HEK293 (cell line): ENCODE measurements at regions of chr6 and their contacts with region 1.

Region 1: DNA sequence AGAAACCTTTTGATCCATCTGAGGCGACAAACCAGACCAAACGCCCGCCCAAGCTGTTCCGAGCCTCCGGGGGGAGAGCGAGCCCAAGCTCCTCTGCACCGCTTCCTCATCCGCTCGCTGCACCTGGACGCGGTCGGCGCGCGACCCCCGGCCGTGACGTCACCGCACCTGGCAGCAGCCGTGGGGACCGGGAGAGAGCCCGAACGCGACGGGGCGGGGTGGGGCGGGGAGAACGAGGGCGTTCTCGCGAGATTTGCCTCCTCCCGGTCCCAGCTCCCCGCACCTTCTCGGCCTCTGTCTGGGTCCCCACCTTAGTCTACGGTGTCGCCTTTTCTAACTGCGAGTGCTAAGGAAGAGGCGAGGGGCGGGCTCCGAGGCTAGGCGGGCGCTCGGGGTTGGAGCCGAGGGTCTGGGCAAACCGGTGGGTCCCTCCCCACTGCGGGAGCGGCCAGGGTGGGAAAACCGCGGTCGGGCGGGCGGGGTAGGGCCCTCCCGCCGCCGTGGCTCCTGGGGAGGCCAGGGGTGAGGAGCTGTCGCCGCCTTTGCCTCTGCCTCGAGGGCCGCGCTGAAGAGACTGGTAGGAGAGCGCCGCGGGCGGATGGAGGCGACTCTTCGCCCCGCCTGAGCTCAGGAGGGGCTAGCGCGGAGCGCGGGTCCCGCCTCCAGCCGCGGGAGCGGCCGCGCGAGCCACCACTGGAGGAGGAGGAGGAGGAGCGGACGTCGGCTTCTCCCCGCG is at the start of gene CD2AP:
- H3K4me3 ChIP-seq: peak within 1 kb of the TSS; percentile 86
- H3K27ac ChIP-seq: peak within 1 kb of the TSS; percentile 99
- H3K4me1 ChIP-seq: peaks cover 9% of the 10 kb centered on the region
- CTCF ChIP-seq: peak; percentile 67

Region 2: GRCh38 chr6:47402081-47402480 is 75.6 kb before region 1 on chr6:
- CTCF ChIA-PET with region 1: no interaction called
- POLR2A ChIA-PET with region 1: no interaction called
- H3K4me3 ChIP-seq: no peak overlapping the region
- H3K27ac ChIP-seq: no peak overlapping the region
- H3K4me1 ChIP-seq: peaks cover 18% of the 10 kb centered on the region
- CTCF ChIP-seq: no peak

Region 3: GRCh38 chr6:47420394-47421371 is 57.0 kb before region 1 on chr6:
- CTCF ChIA-PET with region 1: interaction called, 5 read pairs
- POLR2A ChIA-PET with region 1: interaction called, 47 read pairs
- H3K4me3 ChIP-seq: no peak overlapping the region
- H3K27ac ChIP-seq: no peak overlapping the region
- H3K4me1 ChIP-seq: no peaks in the 10 kb centered on the region
- CTCF ChIP-seq: no peak

Region 4: GRCh38 chr6:47464052-47464451 is 13.6 kb before region 1 on chr6:
- CTCF ChIA-PET with region 1: interaction called, 8 read pairs
- POLR2A ChIA-PET with region 1: interaction called, 12 read pairs
- H3K4me3 ChIP-seq: no peak overlapping the region
- H3K27ac ChIP-seq: no peak overlapping the region
- H3K4me1 ChIP-seq: no peaks in the 10 kb centered on the region
- CTCF ChIP-seq: no peak

Region 5: DNA sequence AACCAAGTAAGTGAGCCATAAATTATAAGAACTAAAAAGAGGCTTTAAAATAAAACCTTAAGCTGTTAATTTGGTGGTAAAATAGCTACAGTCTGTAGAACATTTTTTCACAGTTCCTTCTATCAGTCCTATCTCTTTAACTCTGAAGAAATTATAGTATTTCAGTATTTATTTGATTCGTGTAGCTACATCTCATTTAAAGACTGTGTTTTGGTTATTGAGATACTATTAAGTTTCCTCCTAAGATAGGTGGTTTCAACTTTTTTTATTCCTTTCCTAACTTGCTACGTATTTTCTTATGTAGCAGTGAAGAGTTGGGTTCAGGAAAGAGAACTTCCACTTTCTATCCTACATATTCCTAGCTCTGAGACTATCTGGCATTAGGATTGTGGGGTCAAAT is 97.1 kb after region 1 on chr6:
- CTCF ChIA-PET with region 1: no interaction called
- POLR2A ChIA-PET with region 1: interaction called, 15 read pairs
- H3K4me3 ChIP-seq: no peak overlapping the region
- H3K27ac ChIP-seq: no peak overlapping the region
- H3K4me1 ChIP-seq: peaks cover 26% of the 10 kb centered on the region
- CTCF ChIP-seq: no peak

Region 6: DNA sequence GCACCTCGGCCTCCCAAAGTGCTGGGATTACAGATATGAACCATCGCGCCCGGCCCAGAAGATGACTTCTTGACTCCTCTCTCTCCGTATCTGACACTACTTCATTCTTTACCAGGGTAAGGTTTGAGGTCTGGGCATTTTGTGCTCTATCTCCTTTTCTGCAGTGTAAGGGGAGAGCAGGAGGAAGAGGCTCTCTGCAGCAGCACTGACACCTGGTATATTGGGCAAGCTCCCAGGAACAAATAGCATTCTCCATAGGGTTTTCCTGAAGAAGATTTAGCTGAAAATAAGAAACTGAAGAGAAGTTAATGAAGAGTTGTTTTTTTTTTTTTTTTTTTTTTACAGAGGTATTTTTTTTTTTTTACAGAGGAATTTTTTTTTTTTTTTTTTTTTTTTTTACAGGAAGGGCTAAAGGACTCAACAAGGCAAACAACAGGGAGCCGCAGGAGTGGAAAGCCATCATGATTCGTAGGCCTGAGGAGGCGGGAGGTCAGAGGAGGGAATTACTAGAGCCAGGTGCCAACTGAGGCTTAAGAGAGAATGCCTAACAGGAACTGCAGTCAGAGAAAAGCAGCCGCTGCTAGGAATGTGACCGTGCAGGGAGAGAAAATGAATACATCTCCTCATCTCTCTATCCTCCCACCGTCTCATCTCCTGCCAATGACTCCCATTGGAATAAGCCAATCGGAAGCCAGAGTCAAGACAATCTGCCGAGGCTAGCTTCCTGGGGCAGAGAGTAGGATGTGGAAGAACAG is 186.0 kb after region 1 on chr6:
- CTCF ChIA-PET with region 1: no interaction called
- POLR2A ChIA-PET with region 1: no interaction called
- H3K4me3 ChIP-seq: no peak overlapping the region
- H3K27ac ChIP-seq: no peak overlapping the region
- H3K4me1 ChIP-seq: no peaks in the 10 kb centered on the region
- CTCF ChIP-seq: no peak

Region 7: DNA sequence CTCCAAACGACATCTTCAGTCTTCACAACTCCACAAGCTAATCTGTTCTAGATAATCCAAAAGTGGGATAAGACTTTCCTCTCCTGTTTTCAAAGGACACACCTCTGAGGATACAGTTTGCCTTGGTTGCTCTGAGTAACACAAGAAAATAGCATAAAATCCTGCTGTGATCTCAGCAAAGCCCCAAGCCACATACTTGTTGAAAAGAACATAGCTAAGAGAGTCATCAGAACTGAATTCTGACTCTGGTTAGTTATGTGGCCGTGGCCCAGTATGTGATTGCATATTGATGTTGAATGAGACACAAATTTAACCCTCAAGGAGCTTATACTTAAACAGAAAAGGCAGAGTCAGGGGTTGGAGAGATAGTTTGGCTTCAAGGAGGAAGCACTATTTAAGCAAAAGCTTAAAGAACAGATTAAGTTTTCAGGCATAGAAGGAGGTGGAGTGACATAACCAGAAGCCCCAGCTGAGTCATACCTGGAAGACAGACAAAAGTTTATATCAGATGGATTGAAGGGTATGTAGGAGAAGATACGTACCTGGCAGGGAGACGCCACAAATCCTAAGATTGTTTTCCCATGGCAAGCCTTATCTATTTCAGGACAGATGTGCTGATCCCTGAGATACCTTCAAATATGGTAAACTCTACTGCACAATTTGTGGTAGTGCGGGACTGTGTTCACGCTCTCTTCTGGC is 345.3 kb after region 1 on chr6:
- CTCF ChIA-PET with region 1: no interaction called
- POLR2A ChIA-PET with region 1: no interaction called
- H3K4me3 ChIP-seq: no peak overlapping the region
- H3K27ac ChIP-seq: no peak overlapping the region
- H3K4me1 ChIP-seq: no peaks in the 10 kb centered on the region; the same call in 1 of the 2 replicates
- CTCF ChIP-seq: no peak